ENCODE measurements at regions of chr6 and their contacts with region 1.

Region 1: GRCh38 chr6:159654483-159655098 is 38.5 kb downstream of the SOD2 start:
- DNase-seq: no peak
- H3K4me3 Mint-ChIP-seq: no peak overlapping the region
- H3K27ac Mint-ChIP-seq: no peak overlapping the region
- H3K4me1 Mint-ChIP-seq: no peaks in the 10 kb centered on the region
- H3K27me3 Mint-ChIP-seq: no peaks in the 10 kb centered on the region

Region 2: DNA sequence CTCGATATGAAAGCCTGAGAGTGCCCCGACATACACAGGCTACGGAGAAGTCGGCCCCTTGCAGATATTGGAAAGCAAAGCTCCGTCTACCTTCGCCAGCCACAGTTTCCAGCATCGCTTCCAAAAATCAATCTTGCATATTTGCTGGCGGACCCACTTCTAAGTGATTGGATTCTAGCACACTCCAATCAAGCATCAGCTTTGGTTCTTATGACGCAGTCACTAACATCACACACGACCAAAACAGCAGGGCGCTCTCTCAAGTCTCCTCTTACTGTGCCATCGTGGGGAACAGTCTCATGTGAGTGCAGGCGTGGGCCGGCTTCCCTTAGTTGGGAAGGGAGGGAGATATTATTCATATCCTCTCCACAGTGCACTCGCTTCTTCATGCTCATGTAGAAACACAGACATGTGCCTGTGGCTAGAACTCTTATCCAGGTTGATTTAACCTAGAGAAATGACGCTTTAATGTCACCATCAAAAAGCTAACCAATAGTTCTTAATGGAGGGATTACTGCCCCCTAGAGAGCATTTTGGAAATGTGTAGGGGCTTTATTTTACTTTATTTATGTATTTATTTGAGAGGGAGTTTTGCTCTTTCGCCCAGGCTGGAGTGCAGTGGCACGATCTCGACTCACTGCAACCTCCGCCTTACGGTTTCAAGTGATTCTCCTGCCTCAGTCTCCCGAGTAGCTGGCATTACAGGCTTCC is 191.3 kb before region 1 on chr6:
- CTCF ChIA-PET with region 1: no interaction called
- intact Hi-C with region 1: loop called (anchors 10 kb)
- DNase-seq: no peak
- H3K4me3 Mint-ChIP-seq: no peak overlapping the region
- H3K27ac Mint-ChIP-seq: no peak overlapping the region
- H3K4me1 Mint-ChIP-seq: peaks cover 2% of the 10 kb centered on the region
- H3K27me3 Mint-ChIP-seq: peaks cover 14% of the 10 kb centered on the region

Region 3: DNA sequence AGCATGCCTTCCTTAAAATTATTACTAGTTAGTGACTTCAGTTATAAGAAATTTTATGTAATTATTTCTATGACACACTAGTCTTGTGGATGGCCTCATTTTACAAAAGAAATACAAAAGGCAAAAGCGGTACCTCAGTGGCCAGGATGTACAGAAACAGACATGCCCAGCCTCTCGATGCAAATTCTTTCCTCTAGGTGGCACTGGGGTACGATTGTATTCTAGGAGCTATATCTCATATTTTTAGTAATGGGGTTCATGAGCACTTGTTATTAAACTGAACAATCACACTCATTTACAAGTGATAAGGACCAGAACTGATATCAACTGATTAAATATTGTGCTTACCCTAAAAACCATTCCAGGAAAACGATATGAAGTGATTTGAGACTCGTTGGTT is 21.4 kb before region 1 on chr6:
- CTCF ChIA-PET with region 1: interaction called, 18 read pairs
- intact Hi-C with region 1: no loop called
- DNase-seq: peak; percentile 29
- H3K4me3 Mint-ChIP-seq: no peak overlapping the region
- H3K27ac Mint-ChIP-seq: no peak overlapping the region
- H3K4me1 Mint-ChIP-seq: no peaks in the 10 kb centered on the region
- H3K27me3 Mint-ChIP-seq: no peaks in the 10 kb centered on the region

Region 4: DNA sequence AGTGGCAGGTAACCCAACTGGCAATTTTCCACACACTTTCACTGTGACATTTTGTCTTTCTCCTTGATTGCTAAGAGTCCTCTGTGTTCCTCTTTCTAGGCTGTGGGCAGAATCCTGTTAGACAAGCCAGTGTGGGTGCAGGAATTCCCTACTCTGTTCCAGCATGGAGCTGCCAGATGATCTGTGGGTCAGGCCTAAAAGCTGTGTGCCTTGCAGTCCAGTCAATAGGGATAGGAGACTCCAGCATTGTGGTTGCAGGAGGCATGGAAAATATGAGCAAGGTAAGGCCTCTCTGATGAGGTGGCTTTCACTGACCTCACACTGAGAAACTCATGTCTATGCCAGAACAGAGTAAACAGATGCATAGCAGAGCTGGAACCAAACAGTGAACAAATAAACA is 112.3 kb after region 1 on chr6:
- CTCF ChIA-PET with region 1: no interaction called
- intact Hi-C with region 1: no loop called
- DNase-seq: no peak
- H3K4me3 Mint-ChIP-seq: no peak overlapping the region
- H3K27ac Mint-ChIP-seq: no peak overlapping the region
- H3K4me1 Mint-ChIP-seq: peaks cover 37% of the 10 kb centered on the region
- H3K27me3 Mint-ChIP-seq: no peaks in the 10 kb centered on the region

Region 5: GRCh38 chr6:160510199-160510598 is 855.6 kb after region 1 on chr6:
- CTCF ChIA-PET with region 1: no interaction called
- intact Hi-C with region 1: no loop called
- DNase-seq: no peak
- H3K4me3 Mint-ChIP-seq: no peak overlapping the region
- H3K27ac Mint-ChIP-seq: no peak overlapping the region
- H3K4me1 Mint-ChIP-seq: no peaks in the 10 kb centered on the region
- H3K27me3 Mint-ChIP-seq: no peaks in the 10 kb centered on the region

Measured in activated naive CD4-positive, alpha-beta T cell treated with anti-CD3 and anti-CD28 coated beads for 36 hours (primary cell).